ENCODE measurements at regions of chr19 and their contacts with region 1.

Region 1: GRCh38 chr19:46392243-46392801 is 21.0 kb downstream of the CCDC8 start:
- DNase-seq: no peak
- H3K4me3 Mint-ChIP-seq: no peak overlapping the region
- H3K27ac Mint-ChIP-seq: no peak overlapping the region
- H3K4me1 Mint-ChIP-seq: no peaks in the 10 kb centered on the region
- H3K27me3 Mint-ChIP-seq: no peaks in the 10 kb centered on the region
- CTCF ChIP-seq: no peak

Region 2: DNA sequence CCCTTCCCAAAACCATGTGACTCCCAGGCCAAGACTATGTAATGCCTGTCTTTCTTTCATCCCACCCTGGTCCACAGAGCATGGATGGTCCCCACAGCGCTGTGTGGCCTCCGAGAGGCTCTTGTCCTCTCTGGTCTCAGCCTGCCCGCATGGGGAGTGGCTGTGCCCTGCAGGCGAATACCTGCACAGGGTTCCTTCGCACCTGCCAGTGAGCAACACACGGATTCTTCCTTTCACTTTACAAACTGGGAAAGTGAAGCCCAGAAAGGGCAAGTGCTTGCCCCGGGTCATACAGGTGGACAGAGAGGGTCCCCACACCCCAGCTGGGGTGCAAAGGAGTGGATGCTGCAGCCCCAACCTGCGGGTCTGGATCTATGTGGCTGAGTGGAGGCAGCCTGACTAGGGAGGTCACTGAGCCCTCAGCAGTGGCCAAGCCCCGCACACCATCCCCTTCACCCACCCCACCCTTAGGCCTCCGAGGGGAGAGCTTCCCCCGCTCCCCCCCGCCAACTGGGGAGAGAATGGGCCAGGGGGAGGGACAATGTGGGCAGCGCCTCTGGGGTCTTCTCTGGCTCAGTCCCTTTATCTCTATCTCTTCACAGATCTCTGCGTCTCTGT is 1142.0 kb before region 1 on chr19:
- CTCF ChIA-PET with region 1: no interaction called
- POLR2A ChIA-PET with region 1: no interaction called
- intact Hi-C with region 1: no loop called
- DNase-seq: no peak
- H3K4me3 Mint-ChIP-seq: peak overlapping the region; percentile 75
- H3K27ac Mint-ChIP-seq: peak overlapping the region; percentile 36
- H3K4me1 Mint-ChIP-seq: peaks cover 20% of the 10 kb centered on the region
- H3K27me3 Mint-ChIP-seq: peaks cover 1% of the 10 kb centered on the region
- CTCF ChIP-seq: no peak

Region 3: GRCh38 chr19:46330319-46330918 is 61.9 kb before region 1 on chr19:
- CTCF ChIA-PET with region 1: no interaction called
- POLR2A ChIA-PET with region 1: no interaction called
- intact Hi-C with region 1: no loop called
- DNase-seq: no peak
- H3K4me3 Mint-ChIP-seq: no peak overlapping the region
- H3K27ac Mint-ChIP-seq: no peak overlapping the region
- H3K4me1 Mint-ChIP-seq: no peaks in the 10 kb centered on the region
- H3K27me3 Mint-ChIP-seq: peaks cover 21% of the 10 kb centered on the region
- CTCF ChIP-seq: no peak

Region 4: DNA sequence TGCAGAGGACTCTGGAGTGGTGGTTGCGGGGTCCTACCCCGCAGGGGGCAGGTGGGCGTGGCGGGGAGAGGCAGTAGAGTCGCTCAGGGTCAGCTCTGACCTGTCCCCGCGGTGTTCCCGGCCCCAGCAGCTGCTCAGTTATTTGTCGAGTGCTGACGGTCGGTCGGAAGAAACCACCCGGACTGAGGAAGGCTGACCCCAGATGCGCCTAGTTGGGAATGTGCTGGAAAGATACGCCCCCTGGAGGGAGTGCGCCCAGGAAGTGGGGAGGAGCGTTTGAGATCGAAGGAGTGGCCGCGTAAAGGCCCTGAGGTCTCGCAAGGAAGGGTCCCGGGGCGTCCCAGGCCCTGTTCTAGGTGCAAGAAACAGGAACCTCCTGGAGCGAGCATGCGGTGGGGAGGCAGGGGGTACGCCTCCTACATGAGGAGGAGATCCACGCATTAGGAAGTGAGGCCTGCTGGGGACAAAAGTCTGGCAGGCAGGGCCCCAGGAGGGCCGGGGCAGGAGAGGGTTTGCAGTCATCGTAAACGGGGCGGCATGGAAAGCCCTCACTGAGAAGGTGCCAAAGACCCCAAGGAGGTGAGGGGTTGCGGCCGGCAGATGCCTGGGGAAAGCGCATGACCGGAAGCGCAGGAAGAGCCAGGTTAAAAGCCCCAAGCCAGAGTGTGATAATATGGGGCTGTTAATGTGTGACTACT is 11.9 kb after region 1 on chr19:
- CTCF ChIA-PET with region 1: interaction called, 18 read pairs
- POLR2A ChIA-PET with region 1: interaction called, 3 read pairs
- intact Hi-C with region 1: no loop called
- DNase-seq: no peak
- H3K4me3 Mint-ChIP-seq: no peak overlapping the region
- H3K27ac Mint-ChIP-seq: no peak overlapping the region
- H3K4me1 Mint-ChIP-seq: peaks cover 5% of the 10 kb centered on the region
- H3K27me3 Mint-ChIP-seq: no peaks in the 10 kb centered on the region
- CTCF ChIP-seq: no peak

Region 5: DNA sequence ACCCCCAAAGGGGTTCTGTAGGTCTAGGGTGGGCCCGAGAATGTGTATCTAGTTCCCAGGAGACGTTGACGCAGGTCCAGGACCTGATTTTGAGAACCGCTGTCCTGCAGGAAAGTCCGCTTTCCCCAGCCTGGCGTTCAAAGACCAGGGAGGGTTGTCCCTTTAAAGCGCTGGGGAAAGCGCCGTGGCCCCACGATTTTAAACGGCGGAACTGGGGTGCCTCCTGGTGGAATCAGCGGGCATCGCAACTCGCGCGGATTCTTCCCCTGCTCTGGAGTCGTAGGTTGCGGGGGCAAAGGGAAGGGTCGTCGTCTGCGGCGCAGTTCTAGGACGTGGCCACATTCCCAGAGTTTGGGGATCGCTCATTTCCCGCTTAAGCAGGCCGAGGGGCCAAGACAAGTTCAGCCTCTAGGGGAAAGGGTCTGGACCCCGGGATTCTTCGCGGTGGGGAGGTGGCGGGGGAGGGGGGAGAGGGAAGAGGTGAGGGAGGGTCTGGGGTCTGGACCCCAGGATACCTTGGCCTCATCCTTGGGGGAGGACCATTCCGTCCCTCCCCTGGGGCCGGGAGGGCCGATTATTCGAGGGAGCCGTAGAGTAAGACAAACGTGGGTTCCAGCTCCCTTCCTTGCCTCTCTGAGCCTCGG is 95.6 kb after region 1 on chr19:
- CTCF ChIA-PET with region 1: interaction called, 47 read pairs
- POLR2A ChIA-PET with region 1: interaction called, 7 read pairs
- intact Hi-C with region 1: loop called (anchors 1 kb)
- DNase-seq: peak; percentile 74
- H3K4me3 Mint-ChIP-seq: no peak overlapping the region
- H3K27ac Mint-ChIP-seq: no peak overlapping the region
- H3K4me1 Mint-ChIP-seq: no peaks in the 10 kb centered on the region
- H3K27me3 Mint-ChIP-seq: peaks cover 14% of the 10 kb centered on the region
- CTCF ChIP-seq: peak; percentile 94

Region 6: GRCh38 chr19:46513461-46514236 is 121.3 kb after region 1 on chr19:
- CTCF ChIA-PET with region 1: interaction called, 26 read pairs
- POLR2A ChIA-PET with region 1: no interaction called
- intact Hi-C with region 1: loop called (anchors 1 kb)
- DNase-seq: peak; percentile 75
- H3K4me3 Mint-ChIP-seq: no peak overlapping the region
- H3K27ac Mint-ChIP-seq: no peak overlapping the region
- H3K4me1 Mint-ChIP-seq: peaks cover 7% of the 10 kb centered on the region
- H3K27me3 Mint-ChIP-seq: no peaks in the 10 kb centered on the region
- CTCF ChIP-seq: peak; percentile 95